ENCODE measurements at regions of chr22 and their contacts with region 1.

Region 1: GRCh38 chr22:20013382-20013871 is 3.2 kb downstream of the ARVCF start:
- DNase-seq: no peak
- ATAC-seq: 0 out of 2 replicates have a peak, but pooled peaks have one; percentile 51
- H3K4me3 ChIP-seq: no peak overlapping the region
- H3K27ac ChIP-seq: no peak overlapping the region
- H3K4me1 ChIP-seq: no peaks in the 10 kb centered on the region
- H3K27me3 ChIP-seq: no peaks in the 10 kb centered on the region
- CTCF ChIP-seq: peak; percentile 88

Region 2: GRCh38 chr22:19970479-19971275 is 42.8 kb before region 1 on chr22:
- CTCF ChIA-PET with region 1: interaction called, 10 read pairs
- POLR2A ChIA-PET with region 1: no interaction called
- in situ Hi-C with region 1: no loop called
- intact Hi-C with region 1: loop called (anchors 5 kb)
- DNase-seq: no peak
- ATAC-seq: peak; percentile 77
- H3K4me3 ChIP-seq: no peak overlapping the region
- H3K27ac ChIP-seq: no peak overlapping the region
- H3K4me1 ChIP-seq: peaks cover 11% of the 10 kb centered on the region
- H3K27me3 ChIP-seq: no peaks in the 10 kb centered on the region
- CTCF ChIP-seq: peak; percentile 94

Region 3: GRCh38 chr22:20039683-20040325 is 26.4 kb after region 1 on chr22:
- CTCF ChIA-PET with region 1: no interaction called
- POLR2A ChIA-PET with region 1: no interaction called
- in situ Hi-C with region 1: no loop called
- intact Hi-C with region 1: no loop called
- DNase-seq: no peak
- ATAC-seq: no peak
- H3K4me3 ChIP-seq: no peak overlapping the region
- H3K27ac ChIP-seq: no peak overlapping the region
- H3K4me1 ChIP-seq: no peaks in the 10 kb centered on the region
- H3K27me3 ChIP-seq: no peaks in the 10 kb centered on the region
- CTCF ChIP-seq: no peak

Measured in Panc1 (cell line).